IMR-90 (cell line): ENCODE measurements at regions of chr11 and their contacts with region 1.

Region 1: DNA sequence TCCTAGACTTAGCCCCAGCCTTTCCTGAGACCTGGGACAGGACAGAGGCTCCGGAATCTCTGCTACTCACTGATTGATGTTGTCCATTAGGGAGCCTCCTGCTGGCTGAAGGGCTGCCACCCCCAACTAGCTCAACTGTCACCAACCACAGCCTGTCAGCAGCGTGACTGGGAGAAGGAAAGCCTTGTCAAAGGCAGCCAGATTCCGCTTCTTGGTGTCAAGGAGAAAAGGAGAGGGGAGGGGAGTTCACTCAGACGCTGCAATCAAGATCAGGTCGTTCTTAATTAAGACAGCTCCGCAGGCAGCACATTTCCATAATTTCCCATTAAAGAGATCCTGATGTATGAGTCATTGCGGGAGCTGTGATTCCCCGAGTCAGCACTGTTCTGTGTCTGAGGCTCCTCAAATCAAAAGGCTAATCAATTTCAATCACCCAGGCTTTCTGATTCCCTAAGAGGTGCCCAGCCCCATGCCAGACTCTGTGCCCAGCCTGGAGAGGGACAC is 152.8 kb upstream of the ZBED5 start:
- DNase-seq: peak; percentile 1
- ATAC-seq: peak; percentile 57
- H3K4me3 ChIP-seq: no peak overlapping the region
- H3K27ac ChIP-seq: no peak overlapping the region
- H3K4me1 ChIP-seq: no peaks in the 10 kb centered on the region
- H3K27me3 ChIP-seq: peaks cover 43% of the 10 kb centered on the region
- CTCF ChIP-seq: no peak
- POLR2A ChIP-seq: no peak
- RAD21 ChIP-seq: no peak

Region 2: GRCh38 chr11:10943968-10944367 is 66.7 kb before region 1 on chr11:
- CTCF ChIA-PET with region 1: no interaction called
- POLR2A ChIA-PET with region 1: no interaction called
- dilution Hi-C with region 1: no loop called
- in situ Hi-C with region 1: loop called (anchors 5 kb)
- intact Hi-C with region 1: no loop called
- DNase-seq: no peak
- ATAC-seq: no peak
- H3K4me3 ChIP-seq: no peak overlapping the region
- H3K27ac ChIP-seq: no peak overlapping the region
- H3K4me1 ChIP-seq: no peaks in the 10 kb centered on the region
- H3K27me3 ChIP-seq: peaks cover 27% of the 10 kb centered on the region
- CTCF ChIP-seq: no peak
- POLR2A ChIP-seq: no peak
- RAD21 ChIP-seq: no peak